ENCODE measurements at regions of chr14 and their contacts with region 1.

Region 1: GRCh38 chr14:62711351-62712023 is 333.8 kb downstream of the KCNH5 start:
- DNase-seq: no peak
- H3K4me3 ChIP-seq: no peak overlapping the region
- H3K27ac ChIP-seq: no peak overlapping the region
- H3K4me1 ChIP-seq: no peaks in the 10 kb centered on the region
- H3K27me3 ChIP-seq: no peaks in the 10 kb centered on the region
- CTCF ChIP-seq: no peak

Region 2: GRCh38 chr14:62234849-62235248 is 476.6 kb before region 1 on chr14:
- CTCF ChIA-PET with region 1: no interaction called
- POLR2A ChIA-PET with region 1: interaction called, 17 read pairs
- intact Hi-C with region 1: no loop called
- DNase-seq: no peak
- H3K4me3 ChIP-seq: no peak overlapping the region
- H3K27ac ChIP-seq: no peak overlapping the region
- H3K4me1 ChIP-seq: no peaks in the 10 kb centered on the region
- H3K27me3 ChIP-seq: peaks cover 11% of the 10 kb centered on the region; the same call in 1 of the 2 replicates
- CTCF ChIP-seq: no peak

Region 3: DNA sequence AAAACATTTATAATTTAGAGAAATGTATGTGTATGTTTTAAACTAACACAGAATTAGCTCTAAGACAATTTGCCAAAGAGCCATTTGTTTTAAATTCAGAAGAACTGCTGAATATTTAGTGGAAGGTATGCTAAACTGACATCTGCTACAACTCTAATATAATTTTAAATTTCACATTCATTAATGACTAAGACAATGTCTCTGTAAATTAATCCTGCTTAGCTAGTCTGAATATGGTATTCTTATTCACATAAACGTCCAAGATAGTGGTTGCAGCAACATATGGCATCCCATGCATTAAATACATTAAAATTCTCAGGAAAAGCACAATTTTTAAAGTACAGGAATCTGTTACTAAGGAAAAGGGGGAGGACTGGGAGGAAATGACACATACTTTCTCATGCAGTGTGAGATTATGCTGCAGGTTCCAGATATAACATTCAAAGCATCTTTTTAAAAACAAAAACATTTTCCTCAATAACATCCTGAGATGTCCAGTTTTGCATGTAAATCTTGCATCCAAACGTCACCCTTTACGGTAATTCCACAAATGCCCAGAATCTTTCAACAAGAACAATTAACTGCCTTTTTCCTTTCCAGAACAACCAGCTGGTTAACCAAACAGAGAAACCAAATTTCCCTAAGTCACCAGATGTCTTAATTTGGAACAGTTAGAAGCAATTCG is 903.3 kb after region 1 on chr14:
- CTCF ChIA-PET with region 1: no interaction called
- POLR2A ChIA-PET with region 1: no interaction called
- intact Hi-C with region 1: no loop called
- DNase-seq: no peak
- H3K4me3 ChIP-seq: no peak overlapping the region
- H3K27ac ChIP-seq: no peak overlapping the region
- H3K4me1 ChIP-seq: no peaks in the 10 kb centered on the region
- H3K27me3 ChIP-seq: no peaks in the 10 kb centered on the region
- CTCF ChIP-seq: no peak